Left cardiac atrium (tissue), 4 donors: ENCODE measurements at regions of chr12 and their contacts with region 1.

Region 1: GRCh38 chr12:5003020-5003666 is 40.5 kb upstream of the KCNA5 start:
- DNase-seq: peak; percentile 74
- ATAC-seq: peak; percentile 90 to 96

Region 2: DNA sequence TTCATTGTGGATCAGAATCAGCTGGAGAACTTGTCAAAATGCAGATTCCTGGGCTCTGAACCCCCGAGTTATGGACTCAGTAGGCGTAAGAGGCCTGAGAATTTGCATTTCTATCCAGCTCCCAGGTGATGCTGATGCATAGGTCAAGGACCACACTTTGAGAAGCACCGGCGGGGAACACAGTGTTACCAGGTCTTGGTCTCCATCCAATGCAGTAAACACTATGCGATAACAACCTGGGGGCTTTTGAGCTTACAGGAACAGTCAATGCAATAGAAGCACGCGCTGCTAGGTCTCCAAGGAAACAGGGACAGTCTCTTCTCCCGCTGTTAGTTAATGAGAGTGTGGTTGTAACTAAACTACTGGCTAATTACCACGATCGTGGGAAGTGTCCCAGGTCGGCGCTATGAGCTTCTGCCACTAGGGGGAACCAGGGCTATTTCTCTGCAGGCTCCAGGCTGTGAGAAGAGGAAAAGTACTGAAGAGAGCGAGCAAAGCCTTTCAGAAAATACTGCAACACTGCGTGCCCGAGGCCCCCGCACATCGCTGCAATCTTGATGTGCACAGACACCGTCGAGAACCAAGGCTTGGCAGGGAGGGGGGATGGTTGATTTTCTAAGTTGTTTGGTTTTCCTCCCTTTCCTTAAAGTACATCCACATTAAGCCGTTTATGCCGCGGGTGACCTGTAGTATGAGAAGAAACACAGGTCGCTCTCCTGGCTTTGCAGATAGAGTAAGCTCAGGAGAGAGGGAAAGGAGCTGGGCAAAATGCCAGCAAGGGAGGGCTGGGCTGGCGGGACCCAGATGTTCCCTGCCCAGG is 145.5 kb before region 1 on chr12:
- intact Hi-C with region 1: loop called (anchors 1 to 5 kb)
- DNase-seq: peak; percentile 77
- ATAC-seq: peak; percentile 81 to 88